Dorsolateral prefrontal cortex (tissue), 120 donors: ENCODE measurements at regions of chr10 and their contacts with region 1.

Region 1: GRCh38 chr10:13143766-13144165 is 17.6 kb upstream of the MCM10 start:
- DNase-seq: no peak
- H3K4me3 ChIP-seq: no peak overlapping the region
- H3K27ac ChIP-seq: no peak overlapping the region
- H3K27me3 ChIP-seq: no peaks in the 10 kb centered on the region
- CTCF ChIP-seq: no peak

Region 2: DNA sequence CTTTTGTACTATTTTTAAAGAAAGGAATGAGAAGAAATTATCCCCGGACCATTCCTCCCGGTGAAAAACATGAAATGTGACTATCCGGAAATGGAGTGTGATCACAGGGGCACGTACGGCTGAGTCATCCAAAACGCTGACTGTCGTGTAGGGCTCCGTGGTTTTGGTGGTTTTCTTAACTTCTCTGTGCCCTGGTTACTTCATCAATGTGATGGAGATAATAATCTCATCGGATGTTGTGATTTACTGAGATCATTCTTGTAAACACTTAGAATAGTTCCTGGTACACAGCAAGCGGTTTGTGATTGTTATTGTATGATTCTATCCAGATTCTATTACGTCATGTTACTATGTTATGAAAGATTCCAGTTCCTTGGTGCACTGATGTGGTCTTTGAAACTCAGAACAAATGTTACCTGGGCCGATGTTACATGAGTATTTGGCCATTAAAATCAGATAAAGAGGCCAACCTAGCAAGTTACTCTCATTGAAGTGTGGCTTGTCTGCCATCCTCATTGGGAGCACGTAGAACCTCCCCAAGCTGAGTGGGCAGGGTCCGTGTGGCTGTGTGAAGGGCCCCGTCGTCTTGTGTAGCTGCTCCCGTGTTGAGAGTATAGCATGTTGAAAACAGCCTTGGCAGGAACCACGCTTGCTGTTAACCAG is 694.9 kb before region 1 on chr10:
- intact Hi-C with region 1: loop called in 1 of 2 experiments (anchors 5 kb)
- DNase-seq: no peak
- H3K4me3 ChIP-seq: peak overlapping the region in 2 of 59 donors; percentile 3 to 4
- H3K27ac ChIP-seq: peak overlapping the region in 6 of 59 donors; percentile 27 to 55 (median 42)
- H3K27me3 ChIP-seq: no peaks in the 10 kb centered on the region
- CTCF ChIP-seq: no peak

Region 3: GRCh38 chr10:13165177-13165576 is 21.4 kb after region 1 on chr10:
- intact Hi-C with region 1: no loop called
- DNase-seq: no peak
- H3K4me3 ChIP-seq: no peak overlapping the region
- H3K27ac ChIP-seq: no peak overlapping the region
- H3K27me3 ChIP-seq: no peaks in the 10 kb centered on the region
- CTCF ChIP-seq: no peak